CD8-positive, alpha-beta memory T cell (primary cell): ENCODE measurements at regions of chrX and their contacts with region 1.

Region 1: GRCh38 chrX:20252381-20253231 is 14.1 kb downstream of the RPS6KA3 start:
- DNase-seq: peak; percentile 62 to 79 (median 67)
- H3K4me3 ChIP-seq: no peak overlapping the region
- H3K4me3 Mint-ChIP-seq: peak overlapping the region; percentile 3 to 66 (median 49)
- H3K27ac ChIP-seq: no peak overlapping the region
- H3K27ac Mint-ChIP-seq: peak overlapping the region; percentile 78 to 96 (median 86)
- H3K4me1 ChIP-seq: peaks cover 42% of the 10 kb centered on the region
- H3K4me1 Mint-ChIP-seq: peaks cover 56 to 80% (median 70%) of the 10 kb centered on the region in 3 donors
- H3K27me3 ChIP-seq: no peaks in the 10 kb centered on the region
- H3K27me3 Mint-ChIP-seq: peaks cover 0 to 4% of the 10 kb centered on the region in 2 donors

Region 2: GRCh38 chrX:20437683-20438082 is 185.1 kb after region 1 on chrX:
- CTCF ChIA-PET with region 1: interaction called, 11 read pairs
- POLR2A ChIA-PET with region 1: no interaction called
- DNase-seq: peak in 2 of 5 donors; percentile 29 to 31
- H3K4me3 ChIP-seq: peak overlapping the region; percentile 53
- H3K4me3 Mint-ChIP-seq: peak overlapping the region; percentile 24 to 69 (median 62)
- H3K27ac ChIP-seq: no peak overlapping the region
- H3K27ac Mint-ChIP-seq: peak overlapping the region; percentile 29 to 92 (median 86)
- H3K4me1 ChIP-seq: peaks cover 61% of the 10 kb centered on the region
- H3K4me1 Mint-ChIP-seq: peaks cover 56 to 93% (median 82%) of the 10 kb centered on the region in 3 donors
- H3K27me3 ChIP-seq: no peaks in the 10 kb centered on the region
- H3K27me3 Mint-ChIP-seq: no peaks in the 10 kb centered on the region

Region 3: DNA sequence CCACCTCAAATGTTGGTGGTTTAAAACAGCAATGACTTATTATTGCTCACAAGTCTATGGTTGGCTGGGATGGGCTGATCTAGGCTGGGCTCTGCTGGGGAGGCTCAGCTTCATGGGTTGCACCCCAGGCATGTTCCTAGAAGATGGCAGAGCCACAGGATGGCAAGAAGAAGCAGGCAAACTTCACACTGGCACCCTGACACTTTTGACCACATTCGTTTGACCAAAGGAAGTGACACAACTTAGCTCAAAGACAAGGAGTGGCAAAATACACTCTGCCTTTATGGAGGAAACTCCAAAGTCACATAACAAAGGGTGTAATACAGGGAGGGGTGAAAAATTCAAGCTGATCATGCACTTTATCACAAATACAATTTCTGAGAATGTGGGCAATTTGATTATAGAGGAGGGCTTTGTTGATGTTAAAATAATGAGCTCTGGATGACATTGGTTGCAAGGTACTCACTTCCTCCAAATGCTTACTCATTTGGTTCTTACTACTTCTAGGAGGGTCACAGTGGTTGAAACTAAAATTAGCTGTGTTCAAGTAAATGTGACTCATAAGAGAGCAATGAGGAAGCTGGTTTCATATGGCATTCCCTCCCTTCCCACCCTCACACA is 263.3 kb after region 1 on chrX:
- CTCF ChIA-PET with region 1: no interaction called
- POLR2A ChIA-PET with region 1: no interaction called
- DNase-seq: no peak
- H3K4me3 ChIP-seq: no peak overlapping the region
- H3K4me3 Mint-ChIP-seq: no peak overlapping the region
- H3K27ac ChIP-seq: no peak overlapping the region
- H3K27ac Mint-ChIP-seq: peak overlapping the region in 2 of 8 donors; percentile 20 to 52
- H3K4me1 ChIP-seq: no peaks in the 10 kb centered on the region
- H3K4me1 Mint-ChIP-seq: peaks cover 5 to 11% (median 10%) of the 10 kb centered on the region in 3 donors
- H3K27me3 ChIP-seq: no peaks in the 10 kb centered on the region
- H3K27me3 Mint-ChIP-seq: peaks cover 0 to 10% of the 10 kb centered on the region in 2 donors